Activated B cell treated with CpG ODN at 0.5 μM for 24 hours (primary cell): ENCODE measurements at regions of chr9 and their contacts with region 1.

Region 1: GRCh38 chr9:2132484-2133082 is 117.4 kb downstream of the SMARCA2 start:
- DNase-seq: no peak
- ATAC-seq: no peak
- H3K4me3 Mint-ChIP-seq: no peak overlapping the region
- H3K27ac Mint-ChIP-seq: no peak overlapping the region
- H3K4me1 Mint-ChIP-seq: peaks cover 3% of the 10 kb centered on the region
- H3K27me3 Mint-ChIP-seq: no peaks in the 10 kb centered on the region
- CTCF ChIP-seq: no peak

Region 2: DNA sequence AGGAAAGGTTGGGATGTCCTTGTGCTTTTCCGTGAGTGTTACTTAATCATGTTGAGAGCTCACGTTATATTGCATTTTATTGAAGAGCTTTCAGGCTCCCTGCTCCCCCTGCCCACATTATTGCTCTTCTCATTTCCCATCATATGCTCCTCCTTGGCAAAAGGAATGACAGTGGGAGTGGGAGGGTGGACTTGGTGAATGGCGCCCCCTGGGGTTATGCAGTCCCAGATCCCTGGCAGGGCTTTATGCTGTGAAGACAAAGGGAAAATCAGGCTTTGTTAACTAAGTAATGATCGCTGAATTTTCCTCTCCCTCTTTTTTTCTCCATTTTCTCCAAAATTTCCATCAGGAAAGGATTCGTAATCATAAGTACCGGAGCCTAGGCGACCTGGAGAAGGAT is 49.2 kb after region 1 on chr9:
- CTCF ChIA-PET with region 1: interaction called, 43 read pairs
- POLR2A ChIA-PET with region 1: no interaction called
- intact Hi-C with region 1: loop called (anchors 1 kb)
- DNase-seq: no peak
- ATAC-seq: no peak
- H3K4me3 Mint-ChIP-seq: no peak overlapping the region
- H3K27ac Mint-ChIP-seq: no peak overlapping the region
- H3K4me1 Mint-ChIP-seq: no peaks in the 10 kb centered on the region
- H3K27me3 Mint-ChIP-seq: no peaks in the 10 kb centered on the region
- CTCF ChIP-seq: no peak

Region 3: GRCh38 chr9:2727966-2728613 is 595.5 kb after region 1 on chr9:
- CTCF ChIA-PET with region 1: interaction called, 5 read pairs
- POLR2A ChIA-PET with region 1: no interaction called
- intact Hi-C with region 1: loop called (anchors 1 kb)
- DNase-seq: no peak
- ATAC-seq: peak; percentile 47
- H3K4me3 Mint-ChIP-seq: no peak overlapping the region
- H3K27ac Mint-ChIP-seq: no peak overlapping the region
- H3K4me1 Mint-ChIP-seq: peaks cover 10% of the 10 kb centered on the region
- H3K27me3 Mint-ChIP-seq: no peaks in the 10 kb centered on the region
- CTCF ChIP-seq: no peak

Region 4: GRCh38 chr9:2837915-2838314 is 705.3 kb after region 1 on chr9:
- CTCF ChIA-PET with region 1: no interaction called
- POLR2A ChIA-PET with region 1: no interaction called
- intact Hi-C with region 1: loop called (anchors 5 kb)
- DNase-seq: no peak
- ATAC-seq: no peak
- H3K4me3 Mint-ChIP-seq: no peak overlapping the region
- H3K27ac Mint-ChIP-seq: no peak overlapping the region
- H3K4me1 Mint-ChIP-seq: peaks cover 26% of the 10 kb centered on the region
- H3K27me3 Mint-ChIP-seq: no peaks in the 10 kb centered on the region
- CTCF ChIP-seq: no peak